Right ventricle myocardium inferior (tissue), 1 donor: ENCODE measurements at regions of chr21 and their contacts with region 1.

Region 1: GRCh38 chr21:38494703-38495102 is 3.6 kb downstream of the ERG start:
- DNase-seq: no peak
- ATAC-seq: no peak

Region 2: GRCh38 chr21:38380481-38381137 is 114.1 kb before region 1 on chr21:
- intact Hi-C with region 1: loop called (anchors 10 kb)
- DNase-seq: no peak
- ATAC-seq: no peak

Region 3: GRCh38 chr21:38474124-38474523 is 20.6 kb before region 1 on chr21:
- intact Hi-C with region 1: loop called (anchors 2 kb)
- DNase-seq: no peak
- ATAC-seq: no peak

Region 4: GRCh38 chr21:38897532-38898422 is 403.1 kb after region 1 on chr21:
- intact Hi-C with region 1: no loop called
- DNase-seq: no peak
- ATAC-seq: no peak

Region 5: DNA sequence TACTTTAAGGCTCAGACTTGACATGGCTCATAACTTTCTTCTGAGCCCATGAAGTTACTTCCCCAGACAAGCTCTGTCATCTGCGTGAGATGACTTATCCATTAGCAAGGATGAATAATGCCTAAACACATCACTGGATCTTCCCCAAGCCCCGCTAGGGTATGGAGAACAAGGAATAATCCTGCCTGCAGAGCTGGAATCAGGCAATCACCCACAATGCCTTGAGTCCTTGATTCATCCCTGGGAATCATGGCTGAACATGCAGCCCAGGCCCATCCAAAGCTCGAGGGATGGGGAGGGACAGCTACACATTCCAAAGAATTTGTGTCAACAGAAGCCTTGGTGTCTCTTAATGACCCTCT is 556.9 kb after region 1 on chr21:
- intact Hi-C with region 1: loop called (anchors 10 kb)
- DNase-seq: no peak
- ATAC-seq: no peak